ENCODE measurements at regions of chr3 and their contacts with region 1.

Region 1: DNA sequence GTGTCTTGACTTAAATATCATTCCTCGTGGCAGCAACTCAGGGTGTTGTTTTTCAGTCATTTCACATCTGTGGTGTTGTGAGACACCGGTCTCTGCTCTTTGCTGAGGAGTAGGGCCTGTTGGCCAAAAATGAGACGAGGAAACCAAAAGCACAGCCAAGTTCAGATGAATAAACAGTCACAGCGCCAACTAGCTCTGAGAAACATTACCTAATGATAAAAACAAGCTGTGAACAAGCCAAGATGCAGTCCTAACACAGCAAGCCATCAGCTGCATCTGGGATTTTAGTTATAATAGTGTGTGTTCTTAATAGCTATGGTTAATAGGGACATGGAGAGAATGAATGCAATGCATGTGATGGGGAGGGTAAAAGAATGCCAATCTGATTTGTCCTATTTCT is 843.4 kb upstream of the DPPA4 start:
- DNase-seq: peak in 1 of 2 donors; percentile 46
- ATAC-seq: peak in 7 of 8 donors; percentile 54 to 92 (median 90)
- H3K4me3 ChIP-seq: no peak overlapping the region
- H3K27ac ChIP-seq: no peak overlapping the region
- H3K4me1 ChIP-seq: peaks cover 0 to 16% (median 8%) of the 10 kb centered on the region in 9 donors
- H3K27me3 ChIP-seq: no peaks in the 10 kb centered on the region
- CTCF ChIP-seq: peak in 2 of 9 donors; percentile 27 to 36

Region 2: DNA sequence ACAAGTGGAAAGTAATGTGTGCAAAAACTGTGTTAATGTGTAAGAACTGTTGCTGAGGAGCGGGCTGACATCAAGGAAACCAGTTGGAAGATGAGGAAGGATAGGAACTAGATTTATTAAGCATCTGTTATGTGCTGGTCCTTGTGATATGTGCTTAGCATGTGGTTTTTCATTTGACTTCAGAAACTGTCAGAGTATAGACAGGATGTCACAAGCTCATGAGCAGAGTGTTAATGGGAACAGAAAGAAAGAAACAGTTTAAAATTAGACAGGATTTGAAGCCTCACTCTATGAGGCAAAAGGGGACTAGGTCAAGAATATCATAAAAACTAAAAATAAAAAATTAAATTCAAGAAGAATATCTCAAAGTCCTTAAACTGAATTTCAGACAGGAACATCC is 572.8 kb before region 1 on chr3:
- intact Hi-C with region 1: no loop called
- DNase-seq: no peak
- ATAC-seq: no peak
- H3K4me3 ChIP-seq: no peak overlapping the region
- H3K27ac ChIP-seq: no peak overlapping the region
- H3K4me1 ChIP-seq: no peaks in the 10 kb centered on the region
- H3K27me3 ChIP-seq: no peaks in the 10 kb centered on the region
- CTCF ChIP-seq: no peak

Region 3: DNA sequence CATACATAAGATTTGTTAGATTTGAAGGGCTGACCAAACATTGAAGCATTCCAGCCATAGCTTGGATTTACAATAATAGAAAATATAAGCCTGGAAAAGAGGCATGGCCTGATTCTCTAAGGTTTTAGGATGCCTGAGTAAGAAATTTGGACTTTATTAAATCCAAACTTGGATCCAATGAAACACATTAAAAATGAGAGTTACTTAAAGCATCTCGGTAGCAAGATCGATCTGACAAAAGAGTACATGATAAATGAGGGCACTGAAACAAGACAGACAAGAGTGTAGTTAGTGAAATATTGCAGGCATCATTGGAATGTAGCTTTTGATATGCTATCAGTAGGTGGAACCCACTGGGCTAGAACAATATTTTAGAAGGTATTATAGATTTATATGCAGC is 12.3 kb after region 1 on chr3:
- intact Hi-C with region 1: loop called in 1 of 10 experiments (anchors 1 kb)
- DNase-seq: no peak
- ATAC-seq: no peak
- H3K4me3 ChIP-seq: no peak overlapping the region
- H3K27ac ChIP-seq: no peak overlapping the region
- H3K4me1 ChIP-seq: no peaks in the 10 kb centered on the region
- H3K27me3 ChIP-seq: no peaks in the 10 kb centered on the region
- CTCF ChIP-seq: no peak

Measured in heart right ventricle (tissue), 16 donors.